Esophagus squamous epithelium (tissue), 5 donors: ENCODE measurements at regions of chr3 and their contacts with region 1.

Region 1: GRCh38 chr3:120558771-120559241 is 37.3 kb upstream of the NDUFB4 start:
- DNase-seq: peak; percentile 53
- H3K4me3 ChIP-seq: peak overlapping the region; percentile 14 to 67 (median 46)
- H3K27ac ChIP-seq: peak overlapping the region; percentile 40 to 86 (median 74)
- H3K4me1 ChIP-seq: peaks cover 7 to 38% (median 16%) of the 10 kb centered on the region in 3 donors
- H3K27me3 ChIP-seq: no peaks in the 10 kb centered on the region
- CTCF ChIP-seq: peak; percentile 96 to 100 (median 98)
- POLR2A ChIP-seq: no peak

Region 2: GRCh38 chr3:120239644-120240043 is 319.2 kb before region 1 on chr3:
- intact Hi-C with region 1: loop called (anchors 5 kb)
- DNase-seq: no peak
- H3K4me3 ChIP-seq: no peak overlapping the region
- H3K27ac ChIP-seq: no peak overlapping the region
- H3K4me1 ChIP-seq: no peaks in the 10 kb centered on the region
- H3K27me3 ChIP-seq: no peaks in the 10 kb centered on the region
- CTCF ChIP-seq: no peak
- POLR2A ChIP-seq: no peak

Region 3: GRCh38 chr3:120417272-120417911 is 141.4 kb before region 1 on chr3:
- intact Hi-C with region 1: loop called (anchors 5 kb)
- DNase-seq: peak; percentile 43
- H3K4me3 ChIP-seq: peak overlapping the region; percentile 7 to 52 (median 34)
- H3K27ac ChIP-seq: peak overlapping the region; percentile 51 to 80 (median 73)
- H3K4me1 ChIP-seq: peaks cover 21 to 63% (median 29%) of the 10 kb centered on the region in 3 donors
- H3K27me3 ChIP-seq: no peaks in the 10 kb centered on the region
- CTCF ChIP-seq: peak; percentile 80 to 94 (median 90)
- POLR2A ChIP-seq: no peak

Region 4: GRCh38 chr3:120795017-120795648 is 236.3 kb after region 1 on chr3:
- intact Hi-C with region 1: loop called (anchors 2 kb)
- DNase-seq: peak; percentile 6
- H3K4me3 ChIP-seq: no peak overlapping the region
- H3K27ac ChIP-seq: no peak overlapping the region
- H3K4me1 ChIP-seq: no peaks in the 10 kb centered on the region
- H3K27me3 ChIP-seq: no peaks in the 10 kb centered on the region
- CTCF ChIP-seq: peak; percentile 59 to 88 (median 80)
- POLR2A ChIP-seq: no peak